Activated CD4-positive, alpha-beta T cell treated with anti-CD3 and anti-CD28 coated beads for 36 hours (primary cell): ENCODE measurements at regions of chr12 and their contacts with region 1.

Region 1: GRCh38 chr12:12645485-12645884 is 33.8 kb downstream of the CREBL2 start:
- DNase-seq: peak; percentile 51
- ATAC-seq: peak; percentile 75
- H3K4me3 Mint-ChIP-seq: no peak overlapping the region
- H3K27ac Mint-ChIP-seq: peak overlapping the region; percentile 58
- H3K4me1 Mint-ChIP-seq: peaks cover 21% of the 10 kb centered on the region
- H3K27me3 Mint-ChIP-seq: no peaks in the 10 kb centered on the region

Region 2: GRCh38 chr12:11916771-11917170 is 728.7 kb before region 1 on chr12:
- CTCF ChIA-PET with region 1: no interaction called
- POLR2A ChIA-PET with region 1: no interaction called
- intact Hi-C with region 1: no loop called
- DNase-seq: no peak
- ATAC-seq: peak; percentile 66
- H3K4me3 Mint-ChIP-seq: no peak overlapping the region
- H3K27ac Mint-ChIP-seq: no peak overlapping the region
- H3K4me1 Mint-ChIP-seq: peaks cover 2% of the 10 kb centered on the region
- H3K27me3 Mint-ChIP-seq: no peaks in the 10 kb centered on the region

Region 3: DNA sequence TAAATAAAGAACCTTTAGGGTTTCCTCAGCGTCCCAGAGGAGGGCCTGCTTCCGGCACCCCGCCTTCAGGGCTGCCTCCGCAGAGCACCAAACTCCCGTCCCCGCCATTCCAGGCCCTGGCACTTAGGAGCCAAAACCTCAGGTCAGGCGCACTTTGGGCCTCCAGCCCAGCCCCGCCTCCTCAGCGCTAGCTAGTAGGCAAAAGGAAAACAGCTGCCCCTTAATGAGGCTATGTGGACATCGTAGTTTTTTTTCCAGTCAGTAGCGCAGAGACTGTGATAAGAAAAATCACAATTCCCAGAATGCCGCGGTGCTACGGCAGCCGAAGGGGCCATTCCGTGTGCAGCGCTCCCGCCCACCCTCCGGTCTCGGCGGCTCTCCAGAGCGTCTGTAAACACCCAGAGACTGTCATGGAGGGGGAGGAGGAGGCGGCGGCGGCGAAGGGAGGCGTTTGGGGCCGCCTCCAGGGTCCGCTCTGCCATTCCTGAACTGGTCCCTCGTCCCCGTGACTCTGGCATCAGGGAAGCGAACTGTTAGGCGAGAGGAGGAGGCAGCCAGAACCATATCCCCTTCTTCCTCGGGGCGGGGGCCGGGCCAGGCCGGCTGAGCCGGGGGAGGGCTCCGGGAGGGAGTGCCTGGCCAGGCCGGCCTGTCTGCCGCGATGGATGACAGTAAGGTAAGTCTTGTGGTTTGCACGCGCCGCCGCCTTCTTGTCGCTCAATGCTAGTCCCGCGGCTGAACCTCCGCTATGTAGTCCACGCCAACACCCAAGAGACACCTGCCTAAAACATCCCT is 33.8 kb before region 1 on chr12 and contains the start of gene CREBL2:
- CTCF ChIA-PET with region 1: interaction called, 10 read pairs
- POLR2A ChIA-PET with region 1: no interaction called
- intact Hi-C with region 1: loop called in 1 of 2 experiments (anchors 1 kb)
- DNase-seq: peak; percentile 92
- ATAC-seq: peak; percentile 77
- H3K4me3 Mint-ChIP-seq: peak within 1 kb of the TSS; percentile 93
- H3K27ac Mint-ChIP-seq: peak within 1 kb of the TSS; percentile 98
- H3K4me1 Mint-ChIP-seq: peaks cover 68% of the 10 kb centered on the region
- H3K27me3 Mint-ChIP-seq: no peaks in the 10 kb centered on the region
- total RNA-seq, gene CREBL2: 16.8 to 20.2 TPM

Region 4: DNA sequence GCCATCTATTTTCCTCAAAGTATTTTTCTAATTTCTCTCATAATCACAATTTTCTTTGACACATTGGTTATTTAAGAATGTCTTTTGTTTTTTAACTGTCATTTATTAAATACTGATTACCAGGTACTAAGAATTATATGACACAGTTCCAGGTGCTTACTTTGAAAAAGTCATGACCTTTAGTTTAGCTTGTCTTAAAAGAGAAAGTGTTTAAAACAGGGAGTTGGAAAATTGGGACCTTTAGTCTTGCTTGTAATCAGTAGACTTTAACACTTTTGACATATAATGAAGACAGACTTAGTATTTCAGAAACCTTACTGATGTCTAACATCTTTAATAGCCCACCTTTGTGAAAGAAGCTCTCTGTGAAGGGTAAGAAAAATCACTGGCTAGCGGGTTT is 14.6 kb before region 1 on chr12:
- CTCF ChIA-PET with region 1: interaction called, 32 read pairs
- POLR2A ChIA-PET with region 1: no interaction called
- intact Hi-C with region 1: no loop called
- DNase-seq: no peak
- ATAC-seq: no peak
- H3K4me3 Mint-ChIP-seq: no peak overlapping the region
- H3K27ac Mint-ChIP-seq: peak overlapping the region; percentile 51
- H3K4me1 Mint-ChIP-seq: peaks cover 52% of the 10 kb centered on the region
- H3K27me3 Mint-ChIP-seq: no peaks in the 10 kb centered on the region

Region 5: GRCh38 chr12:12724661-12725545 is 79.4 kb after region 1 on chr12:
- CTCF ChIA-PET with region 1: interaction called, 3 read pairs
- POLR2A ChIA-PET with region 1: no interaction called
- intact Hi-C with region 1: loop called in 1 of 2 experiments (anchors 5 kb)
- DNase-seq: peak; percentile 94
- ATAC-seq: peak; percentile 59
- H3K4me3 Mint-ChIP-seq: peak overlapping the region; percentile 93
- H3K27ac Mint-ChIP-seq: peak overlapping the region; percentile 98
- H3K4me1 Mint-ChIP-seq: peaks cover 45% of the 10 kb centered on the region
- H3K27me3 Mint-ChIP-seq: no peaks in the 10 kb centered on the region

Region 6: GRCh38 chr12:13165617-13166041 is 520.1 kb after region 1 on chr12:
- CTCF ChIA-PET with region 1: no interaction called
- POLR2A ChIA-PET with region 1: no interaction called
- intact Hi-C with region 1: no loop called
- DNase-seq: peak; percentile 92
- ATAC-seq: peak; percentile 97
- H3K4me3 Mint-ChIP-seq: no peak overlapping the region
- H3K27ac Mint-ChIP-seq: peak overlapping the region; percentile 58
- H3K4me1 Mint-ChIP-seq: peaks cover 24% of the 10 kb centered on the region
- H3K27me3 Mint-ChIP-seq: peaks cover 2% of the 10 kb centered on the region